ENCODE measurements at regions of chr15 and their contacts with region 1.

Region 1: DNA sequence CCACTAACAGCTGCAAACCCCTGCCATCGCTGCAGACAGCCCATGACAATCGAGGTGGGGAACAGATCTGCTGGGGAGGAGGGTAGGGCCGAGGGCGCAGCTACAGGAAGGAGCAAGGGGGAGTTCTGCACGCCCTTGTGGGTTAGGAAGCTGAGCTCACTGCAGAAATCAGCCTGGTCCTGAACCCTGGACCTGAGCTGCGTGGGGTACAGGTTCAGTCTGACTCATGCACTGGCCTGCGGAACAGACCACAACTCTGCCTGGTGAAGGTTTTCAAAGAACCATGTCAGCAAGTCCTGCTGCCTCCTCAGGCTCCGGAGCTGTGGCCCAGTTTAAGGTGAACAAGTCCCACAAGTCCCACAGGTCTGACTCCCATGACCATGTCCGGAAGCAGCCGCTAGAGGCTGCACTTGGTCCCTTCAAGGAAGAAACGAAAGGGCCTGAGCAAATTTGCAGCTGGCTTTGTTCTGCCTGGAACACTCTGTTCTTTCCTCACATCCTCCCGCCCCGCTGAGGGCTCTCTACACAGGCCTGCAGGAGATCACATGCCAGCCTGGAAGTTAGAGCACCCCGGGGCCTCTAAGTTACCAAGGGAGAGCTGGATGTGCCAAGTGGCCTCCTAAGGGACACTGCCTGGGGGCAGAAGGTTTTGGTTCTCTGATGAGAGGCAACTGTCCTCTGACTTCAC is 49.4 kb upstream of the AKAP13 start:
- DNase-seq: peak; percentile 90
- ATAC-seq: peak; percentile 84
- H3K4me3 Mint-ChIP-seq: peak overlapping the region; percentile 81
- H3K27ac Mint-ChIP-seq: peak overlapping the region; percentile 92
- H3K4me1 Mint-ChIP-seq: peaks cover 46% of the 10 kb centered on the region
- H3K27me3 Mint-ChIP-seq: no peaks in the 10 kb centered on the region

Region 2: DNA sequence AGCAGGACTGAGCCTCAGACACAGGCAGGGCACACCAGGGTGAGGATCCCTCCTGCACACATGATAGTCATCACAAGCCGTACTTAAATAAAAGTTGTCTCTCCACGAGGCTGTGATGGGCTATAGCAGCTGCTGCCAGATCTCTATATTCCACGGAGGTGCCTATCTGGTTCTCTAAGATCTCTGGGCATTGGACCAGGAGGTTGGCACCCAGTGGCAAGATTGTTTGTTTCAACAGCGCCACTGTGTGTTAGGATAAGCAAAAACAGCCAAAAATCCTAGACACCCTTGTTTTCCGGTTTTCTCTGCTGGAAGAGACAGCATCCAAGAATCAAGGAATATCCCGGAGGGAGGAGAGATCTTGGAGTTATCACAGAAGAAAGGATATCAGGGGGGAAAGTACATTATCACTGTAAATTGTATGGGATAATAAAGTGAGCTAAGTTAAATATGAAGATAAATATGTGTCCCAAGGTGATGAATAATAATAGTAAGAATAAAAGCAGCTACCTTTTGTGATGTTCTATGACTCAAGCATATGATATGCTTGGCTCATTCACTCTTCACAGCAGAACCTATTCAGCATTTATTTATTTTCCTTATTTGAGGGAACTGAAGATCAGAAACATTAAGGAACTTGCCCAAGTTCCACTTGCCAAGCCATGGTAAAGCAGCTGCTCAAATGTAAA is 41.2 kb before region 1 on chr15:
- CTCF ChIA-PET with region 1: interaction called, 39 read pairs
- POLR2A ChIA-PET with region 1: no interaction called
- DNase-seq: peak; percentile 32
- ATAC-seq: no peak
- H3K4me3 Mint-ChIP-seq: no peak overlapping the region
- H3K27ac Mint-ChIP-seq: no peak overlapping the region
- H3K4me1 Mint-ChIP-seq: no peaks in the 10 kb centered on the region
- H3K27me3 Mint-ChIP-seq: peaks cover 27% of the 10 kb centered on the region

Region 3: GRCh38 chr15:85306946-85307708 is 23.9 kb before region 1 on chr15:
- CTCF ChIA-PET with region 1: interaction called, 14 read pairs
- POLR2A ChIA-PET with region 1: interaction called, 9 read pairs
- DNase-seq: no peak
- ATAC-seq: no peak
- H3K4me3 Mint-ChIP-seq: no peak overlapping the region
- H3K27ac Mint-ChIP-seq: no peak overlapping the region
- H3K4me1 Mint-ChIP-seq: peaks cover 14% of the 10 kb centered on the region
- H3K27me3 Mint-ChIP-seq: no peaks in the 10 kb centered on the region

Region 4: GRCh38 chr15:85318048-85318731 is 12.9 kb before region 1 on chr15:
- CTCF ChIA-PET with region 1: interaction called, 147 read pairs
- POLR2A ChIA-PET with region 1: interaction called, 45 read pairs
- DNase-seq: peak; percentile 35
- ATAC-seq: peak; percentile 59
- H3K4me3 Mint-ChIP-seq: no peak overlapping the region
- H3K27ac Mint-ChIP-seq: peak overlapping the region; percentile 68
- H3K4me1 Mint-ChIP-seq: peaks cover 43% of the 10 kb centered on the region
- H3K27me3 Mint-ChIP-seq: no peaks in the 10 kb centered on the region

Region 5: DNA sequence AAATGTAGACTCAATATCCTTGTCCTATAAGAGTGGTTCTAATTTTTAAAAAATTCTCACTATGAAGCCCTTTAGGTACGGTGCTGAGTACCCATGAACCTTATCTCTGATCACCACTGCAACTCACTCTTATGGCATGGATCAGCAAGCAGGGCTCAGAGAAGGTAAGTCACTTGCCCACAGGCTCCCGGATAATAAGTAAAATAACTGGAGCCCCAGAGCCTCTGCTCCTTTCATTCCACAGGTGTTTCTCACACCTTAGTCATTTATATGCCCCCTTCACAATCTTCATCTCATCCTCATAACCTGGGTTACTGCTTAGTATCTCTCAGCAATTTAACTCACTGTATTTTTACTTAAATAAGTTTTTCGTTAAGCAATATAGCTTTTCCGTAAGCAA is 20.9 kb after region 1 on chr15:
- CTCF ChIA-PET with region 1: no interaction called
- POLR2A ChIA-PET with region 1: no interaction called
- DNase-seq: no peak
- ATAC-seq: no peak
- H3K4me3 Mint-ChIP-seq: no peak overlapping the region
- H3K27ac Mint-ChIP-seq: no peak overlapping the region
- H3K4me1 Mint-ChIP-seq: peaks cover 18% of the 10 kb centered on the region
- H3K27me3 Mint-ChIP-seq: peaks cover 3% of the 10 kb centered on the region

Region 6: GRCh38 chr15:85380217-85380811 is 49.3 kb after region 1 on chr15 and contains the start of gene AKAP13:
- CTCF ChIA-PET with region 1: interaction called, 31 read pairs
- POLR2A ChIA-PET with region 1: interaction called, 18 read pairs
- DNase-seq: peak; percentile 98
- ATAC-seq: peak; percentile 88
- H3K4me3 Mint-ChIP-seq: peak within 1 kb of the TSS; percentile 86
- H3K27ac Mint-ChIP-seq: peak within 1 kb of the TSS; percentile 91
- H3K4me1 Mint-ChIP-seq: peaks cover 47% of the 10 kb centered on the region
- H3K27me3 Mint-ChIP-seq: peaks cover 13% of the 10 kb centered on the region
- total RNA-seq, gene AKAP13: 112 to 117 TPM

Region 7: GRCh38 chr15:85582131-85583079 is 251.4 kb after region 1 on chr15:
- CTCF ChIA-PET with region 1: interaction called, 12 read pairs
- POLR2A ChIA-PET with region 1: interaction called, 5 read pairs
- DNase-seq: peak; percentile 82
- ATAC-seq: peak; percentile 90
- H3K4me3 Mint-ChIP-seq: peak overlapping the region; percentile 82
- H3K27ac Mint-ChIP-seq: peak overlapping the region; percentile 95
- H3K4me1 Mint-ChIP-seq: peaks cover 65% of the 10 kb centered on the region
- H3K27me3 Mint-ChIP-seq: no peaks in the 10 kb centered on the region

Measured in activated CD8-positive, alpha-beta T cell treated with anti-CD3 and anti-CD28 coated beads, Interleukin-2, amount 10 ng/mL, durations not matched to agents 7 days and 5 days (primary cell).